Dendritic cell treated with granulocyte-macrophage colony-stimulating factor and Interleukin-4, amounts not matched to agents 40 ng/mL and 50 ng/mL, for 4 days (primary cell): ENCODE measurements at regions of chr19 and their contacts with region 1.

Region 1: GRCh38 chr19:41541990-41542584 is 33.9 kb upstream of the CEACAM21 start:
- H3K4me3 Mint-ChIP-seq: no peak overlapping the region
- H3K27ac Mint-ChIP-seq: no peak overlapping the region
- H3K4me1 Mint-ChIP-seq: peaks cover 50% of the 10 kb centered on the region
- H3K27me3 Mint-ChIP-seq: no peaks in the 10 kb centered on the region

Region 2: DNA sequence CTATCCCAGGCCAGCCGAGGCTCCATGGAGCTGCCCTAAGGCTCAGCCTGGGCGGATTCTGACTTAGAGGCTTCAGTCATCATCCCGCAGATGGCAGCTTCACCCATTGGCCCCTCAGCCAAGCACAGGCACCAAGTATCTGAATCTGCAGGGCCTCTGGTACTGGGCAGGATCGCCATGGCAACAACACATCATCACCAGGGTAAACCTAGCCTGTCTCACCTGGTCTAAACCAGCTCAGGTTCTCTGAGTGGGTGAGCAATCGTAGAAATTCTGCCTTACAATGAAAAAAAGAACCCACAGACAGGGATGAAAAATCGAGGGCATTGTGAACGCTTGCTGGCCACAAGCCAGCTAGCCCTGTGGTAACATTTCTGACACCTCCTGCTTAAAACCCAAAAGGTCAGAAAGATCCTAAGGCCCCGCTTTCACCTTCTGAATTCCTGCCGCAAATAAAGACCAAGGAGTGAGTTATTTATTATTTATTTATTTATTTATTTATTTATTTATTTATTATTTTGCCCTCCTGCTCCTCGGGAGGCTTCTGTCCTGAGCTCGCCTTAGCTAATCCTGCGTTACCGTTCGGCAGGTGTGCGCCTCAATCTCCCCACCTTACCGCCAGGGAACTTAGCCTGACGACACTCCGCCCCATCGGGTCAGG is 21.9 kb after region 1 on chr19:
- intact Hi-C with region 1: loop called (anchors 1 kb)
- H3K4me3 Mint-ChIP-seq: peak overlapping the region; percentile 49
- H3K27ac Mint-ChIP-seq: no peak overlapping the region
- H3K4me1 Mint-ChIP-seq: peaks cover 20% of the 10 kb centered on the region
- H3K27me3 Mint-ChIP-seq: peaks cover 43% of the 10 kb centered on the region

Region 3: DNA sequence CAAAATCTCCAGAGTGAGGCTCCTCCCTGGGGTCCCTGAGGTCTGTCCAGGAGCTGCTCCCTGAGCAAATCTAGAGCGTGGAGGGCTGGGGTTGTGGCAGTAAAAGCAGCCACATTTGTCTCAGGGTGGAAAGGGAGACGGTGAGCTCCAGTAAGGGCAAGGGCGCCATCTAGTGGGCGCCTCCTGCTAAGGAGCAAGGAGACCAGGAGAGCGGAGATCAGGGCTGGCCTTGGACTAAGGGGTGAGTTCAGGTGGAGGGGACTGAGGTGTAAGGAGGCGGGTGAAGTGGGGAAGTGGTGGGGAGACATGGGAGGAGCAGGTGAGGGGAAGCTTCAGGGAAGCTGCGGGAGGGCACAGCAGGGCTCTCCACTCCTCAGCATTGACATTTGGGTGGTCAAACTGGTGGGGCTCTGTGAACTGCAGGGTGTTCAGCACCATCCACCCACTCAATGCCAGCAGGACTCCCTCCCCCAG is 28.6 kb after region 1 on chr19:
- intact Hi-C with region 1: loop called (anchors 2 kb)
- H3K4me3 Mint-ChIP-seq: no peak overlapping the region
- H3K27ac Mint-ChIP-seq: no peak overlapping the region
- H3K4me1 Mint-ChIP-seq: peaks cover 12% of the 10 kb centered on the region
- H3K27me3 Mint-ChIP-seq: peaks cover 25% of the 10 kb centered on the region

Region 4: DNA sequence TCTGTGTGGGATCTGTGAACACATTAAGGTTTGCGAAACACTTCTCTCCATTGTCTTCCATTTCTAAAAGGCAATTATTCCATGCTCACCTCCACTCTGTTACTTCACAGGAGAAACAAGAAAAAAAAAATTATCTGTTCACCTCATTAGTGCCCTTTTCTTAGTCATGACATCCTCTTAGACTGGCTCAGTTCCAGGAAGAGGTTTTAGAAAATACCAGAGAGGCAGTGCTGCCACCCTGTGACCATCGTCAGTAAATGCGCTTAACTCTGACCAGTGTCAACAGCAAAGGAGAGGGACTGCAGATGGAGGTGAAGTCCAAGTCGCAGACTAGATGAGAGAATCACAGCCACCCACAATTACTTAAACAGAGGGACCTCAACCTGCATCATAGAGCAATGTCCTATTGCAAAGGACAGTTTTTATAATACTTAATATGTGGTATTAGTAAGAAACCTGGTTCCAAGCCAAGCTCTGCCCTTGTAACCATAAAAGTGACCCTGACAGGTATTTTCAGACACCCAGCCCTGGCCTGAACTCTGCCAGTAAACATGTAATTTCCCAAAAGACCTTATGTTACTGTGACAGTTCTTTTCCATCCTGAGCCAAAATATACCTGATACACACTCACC is 53.3 kb after region 1 on chr19:
- intact Hi-C with region 1: loop called (anchors 2 kb)
- H3K4me3 Mint-ChIP-seq: no peak overlapping the region
- H3K27ac Mint-ChIP-seq: no peak overlapping the region
- H3K4me1 Mint-ChIP-seq: peaks cover 16% of the 10 kb centered on the region
- H3K27me3 Mint-ChIP-seq: peaks cover 16% of the 10 kb centered on the region